Transverse colon (tissue), 4 donors: ENCODE measurements at regions of chr14 and their contacts with region 1.

Region 1: DNA sequence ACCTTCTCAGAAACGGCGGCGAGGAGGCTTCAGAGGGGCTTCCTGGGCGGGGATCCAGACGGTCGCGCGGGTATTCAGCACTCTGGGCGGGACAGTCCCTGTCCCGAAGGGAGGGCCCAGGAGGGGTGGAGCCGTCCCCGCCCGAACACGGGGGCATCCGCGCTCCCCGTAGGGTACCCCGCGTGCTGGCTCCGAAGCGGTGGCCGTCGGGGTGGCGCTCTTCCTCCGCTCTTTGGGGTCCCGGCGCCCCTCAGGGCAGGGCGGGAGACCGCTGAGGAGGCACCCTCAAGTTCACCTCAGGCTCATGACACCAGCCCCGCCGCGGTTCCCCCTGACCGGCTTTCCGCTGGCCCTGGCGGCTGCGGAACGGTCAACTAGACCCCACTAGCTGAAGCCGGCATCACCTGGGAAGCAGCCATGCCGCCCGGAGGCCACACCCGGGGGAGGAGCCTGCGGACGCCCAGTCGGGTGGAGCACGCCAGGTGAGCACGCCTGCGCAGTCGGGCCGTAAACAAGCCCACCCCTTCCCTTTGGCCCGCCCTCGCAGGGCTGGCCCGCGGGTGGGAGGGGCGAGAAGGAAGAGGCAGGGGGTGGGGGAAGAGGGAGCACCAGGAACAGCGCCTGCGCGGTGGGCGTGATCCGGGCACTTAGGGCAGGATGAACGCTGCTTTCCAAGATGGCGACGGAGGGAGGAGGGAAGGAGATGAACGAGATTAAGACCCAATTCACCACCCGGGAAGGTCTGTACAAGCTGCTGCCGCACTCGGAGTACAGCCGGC is at the start of gene WDR20:
- DNase-seq: peak; percentile 99
- H3K4me3 ChIP-seq: peak within 1 kb of the TSS; percentile 67 to 100 (median 87)
- H3K27ac ChIP-seq: peak within 1 kb of the TSS; percentile 82 to 92 (median 88)
- H3K4me1 ChIP-seq: peaks cover 6 to 30% (median 21%) of the 10 kb centered on the region in 4 donors
- H3K27me3 ChIP-seq: no peaks in the 10 kb centered on the region
- CTCF ChIP-seq: no peak
- EP300 ChIP-seq: no peak
- POLR2A ChIP-seq: peak; percentile 66
- total RNA-seq, gene WDR20: 21.3 to 31.3 (median 24.6) TPM

Region 2: DNA sequence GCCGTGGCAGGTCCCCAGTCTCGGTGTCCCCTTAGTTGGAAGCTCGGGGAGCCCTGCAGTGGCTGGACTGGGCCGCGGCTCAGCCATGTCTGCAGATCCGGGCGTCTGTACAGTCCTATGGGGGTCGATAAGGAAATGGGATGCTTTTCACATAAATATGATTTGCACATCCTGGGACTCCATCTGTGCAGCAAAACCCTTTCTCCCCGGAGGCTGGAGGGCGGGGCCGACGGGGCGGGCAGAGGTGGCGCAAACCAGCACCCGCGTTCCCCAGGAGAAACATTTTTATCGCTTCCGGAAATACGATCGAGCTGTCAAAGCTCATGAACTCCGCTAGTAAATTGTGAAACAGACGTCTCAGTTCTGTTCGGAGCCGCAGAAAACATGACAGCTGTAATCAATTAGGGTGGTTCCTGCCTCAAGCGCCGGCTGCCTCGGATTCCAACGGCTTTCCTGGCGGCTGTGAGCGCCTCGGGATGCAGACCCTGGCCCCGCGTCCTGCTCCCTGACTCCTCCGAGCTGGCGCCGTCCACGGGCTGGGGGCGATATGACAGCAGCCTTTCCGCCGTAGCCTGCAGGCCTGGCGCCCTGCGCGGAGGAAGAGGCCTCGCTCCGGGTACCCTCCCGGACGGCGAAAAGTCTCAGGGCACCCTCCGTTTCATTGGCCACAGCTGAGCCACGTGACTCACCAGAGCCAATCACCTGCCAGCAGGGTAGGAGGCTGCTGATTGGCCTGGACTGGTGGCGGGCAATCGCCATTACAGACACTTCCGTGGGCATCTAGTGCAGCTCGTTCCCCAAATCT is 555.2 kb before region 1 on chr14:
- in situ Hi-C with region 1: no loop called
- intact Hi-C with region 1: no loop called
- DNase-seq: no peak
- H3K4me3 ChIP-seq: peak overlapping the region in 1 of 4 donors; percentile 20
- H3K27ac ChIP-seq: no peak overlapping the region
- H3K4me1 ChIP-seq: no peaks in the 10 kb centered on the region
- H3K27me3 ChIP-seq: no peaks in the 10 kb centered on the region
- CTCF ChIP-seq: no peak
- EP300 ChIP-seq: no peak
- POLR2A ChIP-seq: no peak

Region 3: DNA sequence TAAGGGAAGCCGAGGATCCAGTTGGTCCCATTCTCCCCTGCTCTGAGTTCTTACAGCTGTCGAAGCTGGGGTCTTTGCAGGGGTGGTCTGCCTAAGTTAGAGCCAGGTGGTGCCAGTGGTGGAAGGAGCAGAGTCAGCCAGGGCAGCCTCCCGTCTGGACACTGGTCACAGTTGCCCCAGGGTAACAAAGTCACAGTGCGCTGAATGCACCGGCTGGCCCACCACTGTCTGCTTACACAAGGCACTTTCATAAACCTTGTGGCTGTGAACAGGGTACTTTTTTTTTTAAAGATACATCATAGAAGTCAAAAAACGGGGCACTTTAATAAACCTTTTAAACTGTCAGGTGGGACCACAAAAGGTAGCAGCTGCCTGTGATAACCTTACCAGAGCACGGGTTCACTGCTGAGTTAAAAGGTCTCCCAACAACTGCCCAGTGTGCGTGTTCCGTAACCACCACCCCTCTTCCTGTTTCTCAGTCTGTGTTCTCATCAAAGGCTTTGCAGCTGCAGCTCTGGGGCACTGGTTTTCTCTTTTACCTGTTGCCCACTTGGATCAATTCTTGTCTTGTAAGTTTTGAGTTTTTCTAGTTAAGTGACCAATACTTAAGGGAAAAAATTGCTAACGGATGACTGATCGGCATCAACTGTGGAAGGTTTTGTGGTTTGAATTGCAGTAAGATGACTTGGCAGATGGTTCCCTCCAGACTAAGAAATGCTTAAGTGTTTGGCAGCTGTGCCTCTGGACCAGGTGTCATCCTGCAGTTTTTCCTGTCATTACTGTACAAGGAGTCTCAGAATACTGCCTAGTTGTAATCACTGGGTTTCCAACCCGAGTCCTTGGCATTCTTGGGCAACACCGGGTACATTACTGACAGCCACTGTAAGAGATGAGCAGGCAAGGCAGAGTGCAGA is 119.1 kb before region 1 on chr14:
- in situ Hi-C with region 1: no loop called
- intact Hi-C with region 1: no loop called
- DNase-seq: no peak
- H3K4me3 ChIP-seq: no peak overlapping the region
- H3K27ac ChIP-seq: no peak overlapping the region
- H3K4me1 ChIP-seq: no peaks in the 10 kb centered on the region
- H3K27me3 ChIP-seq: no peaks in the 10 kb centered on the region
- CTCF ChIP-seq: no peak
- EP300 ChIP-seq: no peak
- POLR2A ChIP-seq: no peak

Region 4: DNA sequence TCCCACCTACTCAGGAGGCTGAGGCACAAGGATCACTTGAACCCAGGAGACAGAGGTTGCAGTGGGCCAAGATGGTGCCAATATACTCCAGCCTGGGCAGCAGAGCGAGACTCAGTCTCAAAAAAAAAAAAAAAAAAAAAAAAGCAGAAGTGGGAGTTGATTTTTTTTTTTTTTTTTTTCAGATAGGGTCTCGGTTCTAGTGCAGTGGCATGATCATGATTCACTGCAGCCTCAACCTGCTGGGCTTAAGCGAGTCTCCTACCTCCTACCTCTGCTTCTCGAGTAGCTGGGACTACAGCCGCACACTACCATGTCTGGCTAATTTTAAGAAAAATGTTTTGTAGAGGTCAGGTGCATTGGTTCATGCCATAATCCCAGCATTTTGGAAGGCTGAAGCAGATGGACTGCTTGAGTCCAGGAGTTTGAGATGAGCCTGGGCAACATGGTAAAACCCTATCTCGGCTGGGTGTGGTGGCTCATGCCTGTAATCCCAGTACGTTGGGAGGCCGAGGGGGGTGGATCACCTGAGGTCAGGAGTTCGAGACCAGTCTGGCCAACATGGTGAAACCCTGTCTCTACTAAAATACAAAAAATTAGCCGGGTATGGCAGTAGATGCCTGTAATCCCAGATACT is 36.3 kb before region 1 on chr14:
- in situ Hi-C with region 1: no loop called
- intact Hi-C with region 1: no loop called
- DNase-seq: no peak
- H3K4me3 ChIP-seq: no peak overlapping the region
- H3K27ac ChIP-seq: no peak overlapping the region
- H3K4me1 ChIP-seq: no peaks in the 10 kb centered on the region
- H3K27me3 ChIP-seq: no peaks in the 10 kb centered on the region
- CTCF ChIP-seq: no peak
- EP300 ChIP-seq: no peak
- POLR2A ChIP-seq: no peak

Region 5: GRCh38 chr14:102304611-102305509 is 165.4 kb after region 1 on chr14 and contains the start of gene MOK:
- in situ Hi-C with region 1: no loop called
- intact Hi-C with region 1: loop called (anchors 10 kb)
- DNase-seq: peak; percentile 97
- H3K4me3 ChIP-seq: peak within 1 kb of the TSS; percentile 66 to 89 (median 74)
- H3K27ac ChIP-seq: peak within 1 kb of the TSS; percentile 53 to 86 (median 78)
- H3K4me1 ChIP-seq: peaks cover 0 to 15% (median 6%) of the 10 kb centered on the region in 4 donors
- H3K27me3 ChIP-seq: no peaks in the 10 kb centered on the region
- CTCF ChIP-seq: no peak
- EP300 ChIP-seq: no peak
- POLR2A ChIP-seq: peak; percentile 29
- total RNA-seq, gene MOK: 3.0 to 16.0 (median 11.1) TPM